ENCODE measurements at regions of chr2 and their contacts with region 1.

Region 1: GRCh38 chr2:109613922-109614714 is at the starts of genes SEPTIN10 and SOWAHC:
- DNase-seq: peak; percentile 92
- ATAC-seq: peak; percentile 92
- H3K4me3 ChIP-seq: peak within 1 kb of the TSS; percentile 81 to 88
- H3K27ac ChIP-seq: peak within 1 kb of the TSS; percentile 98
- H3K4me1 ChIP-seq: peaks cover 25% of the 10 kb centered on the region; the same call in 1 of the 2 replicates
- H3K27me3 ChIP-seq: no peaks in the 10 kb centered on the region
- CTCF ChIP-seq: no peak
- total RNA-seq, gene SEPTIN10: 100.0 TPM
- total RNA-seq, gene SOWAHC: 23.4 TPM

Region 2: DNA sequence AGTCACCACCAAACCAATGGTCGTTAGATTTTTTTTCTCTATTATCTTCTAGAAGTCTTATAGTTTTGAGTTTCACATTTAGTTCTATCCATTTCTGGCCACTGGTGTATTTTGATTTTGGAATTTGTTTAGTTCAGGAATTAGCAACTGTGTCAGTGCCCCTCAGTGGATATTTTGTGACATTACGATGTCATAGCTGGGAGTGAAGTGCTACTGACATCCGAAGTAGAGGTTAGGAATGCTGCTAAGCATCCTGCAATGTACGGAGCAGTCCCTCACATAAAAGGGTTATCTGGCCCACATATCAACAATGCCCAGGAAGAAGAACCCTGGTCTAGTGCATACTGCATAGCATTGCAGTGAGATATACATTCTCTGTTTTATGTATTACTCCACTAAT is 1944.8 kb before region 1 on chr2:
- CTCF ChIA-PET with region 1: no interaction called
- POLR2A ChIA-PET with region 1: interaction called, 12 read pairs
- in situ Hi-C with region 1: no loop called
- intact Hi-C with region 1: no loop called
- DNase-seq: no peak
- ATAC-seq: no peak
- H3K4me3 ChIP-seq: no peak overlapping the region
- H3K27ac ChIP-seq: no peak overlapping the region
- H3K4me1 ChIP-seq: no peaks in the 10 kb centered on the region
- H3K27me3 ChIP-seq: no peaks in the 10 kb centered on the region
- CTCF ChIP-seq: peak; percentile 9; the same call in 1 of the 2 replicates

Region 3: DNA sequence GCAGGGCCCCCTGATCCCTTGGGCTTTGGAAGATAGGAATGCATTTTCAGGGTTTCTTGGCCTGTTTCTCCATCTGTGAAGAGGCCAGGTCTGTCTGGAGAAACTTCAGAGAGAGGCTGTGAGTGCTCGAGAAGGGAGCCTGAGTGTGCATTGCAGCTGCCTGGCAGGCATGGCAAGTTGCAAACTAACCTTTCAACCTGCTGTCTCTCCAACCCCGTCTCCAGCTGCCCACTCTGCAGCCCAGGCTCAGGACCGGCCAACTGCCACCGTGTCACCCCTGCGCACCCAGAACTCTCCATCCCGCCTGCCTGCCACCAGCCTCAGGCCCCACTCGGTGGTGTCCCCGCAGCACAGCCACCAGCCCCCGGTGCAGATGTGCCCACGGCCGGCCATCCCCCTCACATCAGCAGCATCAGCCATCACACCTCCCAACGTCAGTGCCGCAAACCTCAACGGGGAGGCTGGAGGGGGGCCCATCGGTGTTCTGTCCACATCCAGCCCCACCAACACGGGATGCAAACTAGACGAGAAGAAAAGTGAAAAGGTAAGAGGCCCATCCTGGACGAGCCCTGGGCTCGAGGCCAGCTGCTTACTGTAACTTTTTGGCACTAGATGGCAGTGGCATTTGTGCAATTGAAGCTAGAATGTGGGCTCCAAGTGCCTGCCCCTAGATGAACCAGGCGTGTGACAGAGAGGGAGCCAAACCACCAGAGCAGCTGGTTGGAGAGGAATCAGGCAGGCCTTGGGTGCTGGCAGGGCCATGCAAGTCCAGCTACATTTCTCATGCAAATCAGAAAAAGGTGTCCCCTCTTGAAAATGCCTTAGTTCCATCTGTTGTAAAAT is 165.0 kb before region 1 on chr2:
- CTCF ChIA-PET with region 1: no interaction called
- POLR2A ChIA-PET with region 1: no interaction called
- in situ Hi-C with region 1: no loop called
- intact Hi-C with region 1: no loop called
- DNase-seq: no peak
- ATAC-seq: peak; percentile 64; the same call in 1 of the 2 replicates
- H3K4me3 ChIP-seq: no peak overlapping the region
- H3K27ac ChIP-seq: no peak overlapping the region
- H3K4me1 ChIP-seq: no peaks in the 10 kb centered on the region
- H3K27me3 ChIP-seq: no peaks in the 10 kb centered on the region
- CTCF ChIP-seq: no peak

Region 4: DNA sequence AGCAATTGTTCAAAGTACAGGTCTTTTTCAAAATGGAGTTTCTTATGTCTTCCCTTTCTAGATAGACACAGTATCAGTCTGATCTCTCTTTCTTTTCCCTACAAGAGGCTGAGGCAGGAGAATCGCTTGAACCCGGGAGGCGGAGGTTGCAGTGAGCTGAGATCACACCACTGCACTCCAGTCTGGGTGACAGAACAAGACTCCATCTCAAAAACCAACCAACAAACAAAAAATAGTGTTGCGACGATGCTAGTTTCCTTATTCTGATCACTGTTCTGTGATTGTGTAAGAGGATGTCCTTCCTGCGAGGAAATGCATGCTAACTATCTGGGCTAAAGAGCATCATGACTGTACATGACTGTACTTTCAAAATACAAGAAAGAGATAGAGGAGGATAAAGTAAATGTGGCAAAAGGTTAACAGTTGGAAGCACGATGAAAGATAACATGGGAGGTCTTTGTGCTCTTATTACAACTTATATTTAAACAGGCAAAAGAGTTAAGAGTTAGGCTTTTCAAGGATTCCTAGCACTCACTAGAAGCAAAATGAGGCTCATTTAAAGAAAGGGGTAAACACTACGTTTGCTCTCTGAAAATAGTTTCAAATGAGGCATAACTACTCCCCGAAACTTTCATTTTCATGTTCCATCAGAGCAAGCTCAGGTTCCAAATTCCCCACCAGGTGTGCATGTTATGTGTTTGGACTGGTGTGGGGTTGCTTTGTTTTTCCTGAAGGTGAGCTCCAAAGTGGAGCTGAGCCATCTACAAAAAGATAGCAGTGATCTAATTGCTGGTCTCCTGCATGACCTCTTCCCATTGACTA is 23.8 kb after region 1 on chr2:
- CTCF ChIA-PET with region 1: no interaction called
- POLR2A ChIA-PET with region 1: no interaction called
- in situ Hi-C with region 1: no loop called
- intact Hi-C with region 1: no loop called
- DNase-seq: no peak
- ATAC-seq: no peak
- H3K4me3 ChIP-seq: no peak overlapping the region
- H3K27ac ChIP-seq: no peak overlapping the region
- H3K4me1 ChIP-seq: no peaks in the 10 kb centered on the region
- H3K27me3 ChIP-seq: no peaks in the 10 kb centered on the region
- CTCF ChIP-seq: no peak

Region 5: GRCh38 chr2:109663721-109664120 is 49.6 kb after region 1 on chr2:
- CTCF ChIA-PET with region 1: no interaction called
- POLR2A ChIA-PET with region 1: no interaction called
- in situ Hi-C with region 1: no loop called
- intact Hi-C with region 1: loop called (anchors 5 kb)
- DNase-seq: no peak
- ATAC-seq: no peak
- H3K4me3 ChIP-seq: no peak overlapping the region
- H3K27ac ChIP-seq: no peak overlapping the region
- H3K4me1 ChIP-seq: no peaks in the 10 kb centered on the region
- H3K27me3 ChIP-seq: no peaks in the 10 kb centered on the region; the same call in 1 of the 2 replicates
- CTCF ChIP-seq: no peak

Region 6: DNA sequence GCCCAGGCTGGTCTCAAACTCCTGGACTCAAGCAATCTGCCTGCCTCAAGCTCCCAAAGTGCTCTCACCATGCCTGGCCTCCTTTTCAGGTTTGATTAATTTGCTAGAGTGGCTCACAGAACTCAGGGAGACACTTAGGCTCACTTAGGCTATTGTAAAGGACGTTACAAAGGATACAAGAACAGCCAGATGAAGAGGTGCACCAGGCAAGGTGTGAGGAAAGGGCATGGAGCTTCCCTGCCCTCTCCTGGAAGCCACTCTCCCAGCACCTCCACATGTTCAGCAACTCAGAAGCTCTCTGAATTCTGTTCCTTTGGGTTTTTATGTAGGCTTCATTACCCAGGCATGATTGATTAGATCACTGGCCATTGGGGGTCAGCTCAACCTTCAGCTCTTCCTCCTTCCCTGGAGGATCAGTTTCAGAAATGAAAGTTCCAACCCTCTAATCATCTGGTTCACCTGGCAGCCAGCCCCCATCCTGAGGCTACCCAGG is 101.2 kb after region 1 on chr2:
- CTCF ChIA-PET with region 1: no interaction called
- POLR2A ChIA-PET with region 1: no interaction called
- in situ Hi-C with region 1: no loop called
- intact Hi-C with region 1: loop called (anchors 10 kb)
- DNase-seq: no peak
- ATAC-seq: peak; percentile 87
- H3K4me3 ChIP-seq: no peak overlapping the region
- H3K27ac ChIP-seq: no peak overlapping the region
- H3K4me1 ChIP-seq: no peaks in the 10 kb centered on the region
- H3K27me3 ChIP-seq: no peaks in the 10 kb centered on the region
- CTCF ChIP-seq: peak; percentile 87; the same call in 1 of the 2 replicates

Region 7: GRCh38 chr2:109736177-109736827 is 122.2 kb after region 1 on chr2:
- CTCF ChIA-PET with region 1: no interaction called
- POLR2A ChIA-PET with region 1: no interaction called
- in situ Hi-C with region 1: no loop called
- intact Hi-C with region 1: loop called (anchors 5 kb)
- DNase-seq: no peak
- ATAC-seq: peak; percentile 94
- H3K4me3 ChIP-seq: 0 out of 4 replicates have a peak overlapping the region, but pooled peaks of 1 of the 2 experiments have one; percentile 2
- H3K27ac ChIP-seq: 0 out of 2 replicates have a peak overlapping the region, but pooled peaks have one; percentile 14
- H3K4me1 ChIP-seq: no peaks in the 10 kb centered on the region
- H3K27me3 ChIP-seq: no peaks in the 10 kb centered on the region
- CTCF ChIP-seq: peak; percentile 89

Measured in Panc1 (cell line).